Prostate gland (tissue), 2 donors: ENCODE measurements at regions of chr15 and their contacts with region 1.

Region 1: GRCh38 chr15:81480645-81481053 is 106.6 kb upstream of the TMC3 start:
- DNase-seq: peak; percentile 56
- H3K4me3 ChIP-seq: no peak overlapping the region
- H3K27ac ChIP-seq: no peak overlapping the region
- H3K4me1 ChIP-seq: no peaks in the 10 kb centered on the region
- H3K27me3 ChIP-seq: no peaks in the 10 kb centered on the region
- CTCF ChIP-seq: peak; percentile 73 to 97 (median 84)
- POLR2A ChIP-seq: no peak

Region 2: GRCh38 chr15:81133782-81134461 is 346.7 kb before region 1 on chr15 and contains the start of gene CFAP161:
- intact Hi-C with region 1: no loop called
- DNase-seq: peak; percentile 49
- H3K4me3 ChIP-seq: peak within 1 kb of the TSS in 1 of 2 donors; percentile 13
- H3K27ac ChIP-seq: no peak within 1 kb of the TSS
- H3K4me1 ChIP-seq: no peaks in the 10 kb centered on the region
- H3K27me3 ChIP-seq: no peaks in the 10 kb centered on the region
- CTCF ChIP-seq: peak in 2 of 4 experiments; percentile 18 to 26
- POLR2A ChIP-seq: no peak
- total RNA-seq, gene CFAP161: 2.9 TPM in 1 of 2 donors, not detected in the other

Region 3: GRCh38 chr15:81819924-81820635 is 339.4 kb after region 1 on chr15:
- intact Hi-C with region 1: loop called (anchors 10 kb)
- DNase-seq: no peak
- H3K4me3 ChIP-seq: no peak overlapping the region
- H3K27ac ChIP-seq: no peak overlapping the region
- H3K4me1 ChIP-seq: no peaks in the 10 kb centered on the region
- H3K27me3 ChIP-seq: no peaks in the 10 kb centered on the region
- CTCF ChIP-seq: no peak
- POLR2A ChIP-seq: no peak

Region 4: DNA sequence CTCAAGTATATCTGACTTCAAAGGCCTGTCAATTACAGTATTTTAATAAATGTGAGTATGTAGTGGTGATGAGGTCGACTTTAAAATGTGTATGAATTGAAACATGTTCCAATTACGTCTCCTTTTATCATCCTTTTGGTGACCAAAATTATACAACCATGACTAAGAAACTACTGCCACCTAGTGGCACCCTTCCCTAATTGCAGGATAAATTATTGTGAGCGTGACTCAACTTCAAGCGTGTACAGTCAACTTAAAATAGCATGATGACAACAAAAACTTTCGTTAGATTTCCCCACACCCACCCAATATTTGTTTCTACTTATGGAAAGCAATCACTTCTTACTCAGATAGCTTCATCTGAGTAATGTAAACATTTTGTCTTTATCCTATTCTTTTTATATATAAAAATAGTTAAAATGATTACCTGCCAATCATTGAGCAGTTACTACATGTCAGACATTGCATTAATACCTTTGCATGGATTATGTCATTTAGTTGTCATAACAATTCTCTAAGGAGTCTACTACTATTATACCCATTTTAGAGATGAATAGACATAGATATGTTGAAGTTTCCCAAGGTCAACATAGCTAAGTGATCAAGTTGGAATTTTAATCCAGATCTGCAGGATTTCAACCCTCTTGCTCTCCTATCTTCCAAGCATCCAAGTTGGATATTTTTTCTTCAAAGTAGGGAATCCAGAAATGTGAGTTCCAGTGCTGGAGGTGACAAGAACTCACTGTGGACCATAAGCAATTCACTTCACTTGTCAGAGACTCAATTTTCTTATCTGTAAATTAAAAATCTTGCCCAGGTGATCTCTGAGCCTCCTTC is 459.2 kb after region 1 on chr15:
- intact Hi-C with region 1: loop called (anchors 10 kb)
- DNase-seq: no peak
- H3K4me3 ChIP-seq: no peak overlapping the region
- H3K27ac ChIP-seq: no peak overlapping the region
- H3K4me1 ChIP-seq: no peaks in the 10 kb centered on the region
- H3K27me3 ChIP-seq: no peaks in the 10 kb centered on the region
- CTCF ChIP-seq: peak in 3 of 4 experiments; percentile 56 to 70 (median 56)
- POLR2A ChIP-seq: no peak

Region 5: DNA sequence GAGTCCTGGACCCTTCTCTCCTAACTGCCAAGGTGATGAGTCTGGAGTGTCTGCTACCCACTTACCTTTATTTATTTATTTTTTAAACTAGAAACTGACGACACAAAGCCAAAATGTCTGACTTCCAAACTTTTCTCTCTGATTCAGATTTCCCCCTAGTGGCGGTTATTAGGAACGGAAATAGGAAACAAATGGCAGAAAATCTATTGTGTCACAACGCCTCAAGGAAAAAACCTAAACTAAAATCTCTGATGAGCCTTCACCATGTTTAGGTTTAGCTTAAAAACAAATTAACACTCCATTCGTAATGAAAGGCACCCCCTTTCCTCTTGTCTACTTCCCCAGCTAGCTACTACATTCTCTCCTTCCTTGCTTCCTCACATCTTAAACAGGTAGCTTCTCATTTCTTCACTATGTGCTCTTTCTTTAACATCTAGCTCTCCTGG is 659.2 kb after region 1 on chr15:
- intact Hi-C with region 1: loop called (anchors 5 kb)
- DNase-seq: no peak
- H3K4me3 ChIP-seq: no peak overlapping the region
- H3K27ac ChIP-seq: no peak overlapping the region
- H3K4me1 ChIP-seq: no peaks in the 10 kb centered on the region
- H3K27me3 ChIP-seq: no peaks in the 10 kb centered on the region
- CTCF ChIP-seq: peak; percentile 48 to 65 (median 58)
- POLR2A ChIP-seq: no peak

Region 6: DNA sequence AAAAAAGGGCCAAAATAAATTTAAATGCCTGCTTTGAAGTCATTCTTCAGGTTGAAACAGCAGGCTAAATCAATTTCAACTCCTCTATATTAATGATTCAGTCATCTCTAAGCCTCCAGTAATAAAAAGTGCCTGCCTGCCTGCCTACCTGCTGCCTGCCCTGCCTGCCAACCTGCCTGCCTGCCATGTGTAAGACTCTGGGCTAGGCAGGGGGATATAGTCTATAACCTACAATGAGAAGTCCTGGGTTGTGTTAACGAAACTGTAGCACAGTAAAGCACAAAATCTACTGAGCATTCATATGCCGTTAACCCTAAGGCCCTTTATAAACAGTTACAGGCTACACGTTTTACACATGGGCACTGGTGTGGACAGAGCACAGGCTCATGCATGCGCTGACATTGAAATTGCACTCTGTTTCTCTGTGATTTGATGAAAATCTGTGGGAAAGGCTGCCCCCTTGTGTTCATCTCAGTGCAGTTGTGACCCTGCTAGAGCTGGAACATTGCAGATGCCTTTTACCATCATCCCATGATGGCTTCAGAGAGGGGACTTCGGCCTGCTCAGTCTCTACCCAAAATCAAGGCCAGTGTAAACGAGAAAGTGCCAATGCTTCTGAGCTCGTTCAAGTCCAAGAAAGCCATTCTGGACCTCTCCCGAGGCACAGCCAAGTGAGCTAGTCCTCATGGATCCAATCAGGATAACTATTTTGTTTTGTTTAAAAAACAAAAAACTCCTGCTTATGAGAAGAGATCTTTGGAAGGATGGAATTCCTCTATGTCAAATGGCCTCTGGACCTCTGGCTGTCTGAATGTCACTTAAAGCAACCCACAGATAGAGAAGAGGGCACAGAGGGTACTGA is 717.3 kb after region 1 on chr15:
- intact Hi-C with region 1: loop called (anchors 10 kb)
- DNase-seq: peak; percentile 66
- H3K4me3 ChIP-seq: no peak overlapping the region
- H3K27ac ChIP-seq: no peak overlapping the region
- H3K4me1 ChIP-seq: no peaks in the 10 kb centered on the region
- H3K27me3 ChIP-seq: no peaks in the 10 kb centered on the region
- CTCF ChIP-seq: peak; percentile 22 to 79 (median 76)
- POLR2A ChIP-seq: no peak